HepG2 (cell line): ENCODE measurements at regions of chr14 and their contacts with region 1.

Region 1: GRCh38 chr14:50116181-50116956 is at the start of gene VCPKMT:
- DNase-seq: peak; percentile 80
- ATAC-seq: peak; percentile 99
- H3K4me3 ChIP-seq: peak within 1 kb of the TSS; percentile 78 to 87 (median 82)
- H3K27ac ChIP-seq: peak within 1 kb of the TSS; percentile 67
- H3K4me1 ChIP-seq: peaks cover 20% of the 10 kb centered on the region
- H3K27me3 ChIP-seq: no peaks in the 10 kb centered on the region
- CTCF ChIP-seq: 0 out of 2 replicates have a peak, but pooled peaks have one; percentile 15
- EP300 ChIP-seq: peak in 1 of 2 experiments; percentile 45; a peak in 1 of 4 replicates
- POLR2A ChIP-seq: peak; percentile 88 to 96
- RAD21 ChIP-seq: peak; percentile 44; the same call in 1 of the 2 replicates
- total RNA-seq, gene VCPKMT: 5.4 and 5.5 TPM in 2 replicates

Region 2: GRCh38 chr14:49862089-49862673 is 254.2 kb before region 1 on chr14:
- CTCF ChIA-PET with region 1: no interaction called
- POLR2A ChIA-PET with region 1: interaction called, 17 read pairs
- in situ Hi-C with region 1: loop called (anchors 5 kb)
- intact Hi-C with region 1: no loop called
- DNase-seq: peak; percentile 69
- ATAC-seq: peak; percentile 69
- H3K4me3 ChIP-seq: peak overlapping the region; percentile 72 to 89 (median 80)
- H3K27ac ChIP-seq: peak overlapping the region; percentile 92
- H3K4me1 ChIP-seq: peaks cover 30% of the 10 kb centered on the region
- H3K27me3 ChIP-seq: no peaks in the 10 kb centered on the region; a peak in 1 of 5 replicates
- CTCF ChIP-seq: peak; percentile 89
- EP300 ChIP-seq: no peak
- POLR2A ChIP-seq: no peak
- RAD21 ChIP-seq: no peak

Region 3: GRCh38 chr14:50099335-50099734 is 17.0 kb before region 1 on chr14:
- CTCF ChIA-PET with region 1: no interaction called
- POLR2A ChIA-PET with region 1: no interaction called
- in situ Hi-C with region 1: no loop called
- intact Hi-C with region 1: no loop called
- DNase-seq: peak; percentile 25
- ATAC-seq: peak; percentile 71
- H3K4me3 ChIP-seq: no peak overlapping the region
- H3K27ac ChIP-seq: no peak overlapping the region
- H3K4me1 ChIP-seq: peaks cover 25% of the 10 kb centered on the region
- H3K27me3 ChIP-seq: no peaks in the 10 kb centered on the region
- CTCF ChIP-seq: no peak
- EP300 ChIP-seq: no peak
- POLR2A ChIP-seq: no peak
- RAD21 ChIP-seq: no peak

Region 4: DNA sequence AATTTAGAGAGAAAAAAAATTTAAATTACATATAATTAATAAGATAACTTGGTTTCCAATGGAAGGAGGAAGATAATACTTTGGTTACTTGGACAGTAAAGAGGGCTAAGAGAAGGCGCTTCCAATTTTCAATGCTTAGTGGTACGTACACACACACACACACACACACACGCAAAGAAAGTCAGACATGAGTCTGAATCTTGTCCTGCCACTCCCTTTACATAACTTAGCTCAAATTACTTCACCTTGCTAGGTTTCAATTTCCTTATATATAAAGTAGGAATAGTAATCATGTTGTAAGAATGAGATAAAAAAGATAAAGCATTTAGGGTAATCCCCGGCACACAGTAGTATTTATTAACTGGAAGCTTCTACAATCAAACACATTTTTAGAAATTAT is 39.7 kb after region 1 on chr14:
- CTCF ChIA-PET with region 1: no interaction called
- POLR2A ChIA-PET with region 1: no interaction called
- in situ Hi-C with region 1: no loop called
- intact Hi-C with region 1: no loop called
- DNase-seq: no peak
- ATAC-seq: no peak
- H3K4me3 ChIP-seq: no peak overlapping the region
- H3K27ac ChIP-seq: no peak overlapping the region
- H3K4me1 ChIP-seq: no peaks in the 10 kb centered on the region
- H3K27me3 ChIP-seq: no peaks in the 10 kb centered on the region
- CTCF ChIP-seq: no peak
- EP300 ChIP-seq: no peak
- POLR2A ChIP-seq: no peak
- RAD21 ChIP-seq: no peak

Region 5: GRCh38 chr14:50388256-50388931 is 272.0 kb after region 1 on chr14:
- CTCF ChIA-PET with region 1: no interaction called
- POLR2A ChIA-PET with region 1: no interaction called
- in situ Hi-C with region 1: no loop called
- intact Hi-C with region 1: no loop called
- DNase-seq: no peak
- ATAC-seq: no peak
- H3K4me3 ChIP-seq: no peak overlapping the region
- H3K27ac ChIP-seq: no peak overlapping the region
- H3K4me1 ChIP-seq: peaks cover 40% of the 10 kb centered on the region
- H3K27me3 ChIP-seq: no peaks in the 10 kb centered on the region
- CTCF ChIP-seq: no peak
- EP300 ChIP-seq: no peak
- POLR2A ChIP-seq: no peak
- RAD21 ChIP-seq: no peak